Activated CD8-positive, alpha-beta T cell treated with anti-CD3 and anti-CD28 coated beads, Interleukin-2, amount 10 ng/mL, durations not matched to agents 7 days and 5 days (primary cell): ENCODE measurements at regions of chr6 and their contacts with region 1.

Region 1: GRCh38 chr6:29705389-29706231 is 17.6 kb upstream of the HLA-F start:
- DNase-seq: peak; percentile 39
- ATAC-seq: no peak
- H3K4me3 Mint-ChIP-seq: no peak overlapping the region
- H3K27ac Mint-ChIP-seq: no peak overlapping the region
- H3K4me1 Mint-ChIP-seq: peaks cover 51% of the 10 kb centered on the region
- H3K27me3 Mint-ChIP-seq: peaks cover 13% of the 10 kb centered on the region

Region 2: DNA sequence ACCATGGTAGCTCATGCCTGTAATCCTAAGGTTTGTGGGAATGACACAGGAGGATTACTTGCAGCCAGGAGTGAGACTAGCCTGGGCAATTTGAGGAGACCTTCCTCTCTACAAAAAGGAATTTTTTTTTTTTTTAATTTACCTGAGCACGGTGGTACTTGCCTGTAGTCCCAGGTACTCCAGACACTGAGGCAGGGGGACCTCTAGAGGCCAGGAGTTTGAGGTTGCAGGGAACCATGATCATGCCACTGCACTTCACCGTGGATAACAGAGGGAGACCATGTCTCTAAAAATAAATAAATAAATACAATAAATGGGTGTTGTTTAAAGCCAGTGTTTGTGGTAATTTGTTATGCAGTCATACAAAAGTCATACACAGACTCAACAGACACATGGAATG is 15.3 kb after region 1 on chr6:
- CTCF ChIA-PET with region 1: interaction called, 16 read pairs
- POLR2A ChIA-PET with region 1: no interaction called
- DNase-seq: no peak
- ATAC-seq: no peak
- H3K4me3 Mint-ChIP-seq: no peak overlapping the region
- H3K27ac Mint-ChIP-seq: no peak overlapping the region
- H3K4me1 Mint-ChIP-seq: peaks cover 36% of the 10 kb centered on the region
- H3K27me3 Mint-ChIP-seq: no peaks in the 10 kb centered on the region

Region 3: DNA sequence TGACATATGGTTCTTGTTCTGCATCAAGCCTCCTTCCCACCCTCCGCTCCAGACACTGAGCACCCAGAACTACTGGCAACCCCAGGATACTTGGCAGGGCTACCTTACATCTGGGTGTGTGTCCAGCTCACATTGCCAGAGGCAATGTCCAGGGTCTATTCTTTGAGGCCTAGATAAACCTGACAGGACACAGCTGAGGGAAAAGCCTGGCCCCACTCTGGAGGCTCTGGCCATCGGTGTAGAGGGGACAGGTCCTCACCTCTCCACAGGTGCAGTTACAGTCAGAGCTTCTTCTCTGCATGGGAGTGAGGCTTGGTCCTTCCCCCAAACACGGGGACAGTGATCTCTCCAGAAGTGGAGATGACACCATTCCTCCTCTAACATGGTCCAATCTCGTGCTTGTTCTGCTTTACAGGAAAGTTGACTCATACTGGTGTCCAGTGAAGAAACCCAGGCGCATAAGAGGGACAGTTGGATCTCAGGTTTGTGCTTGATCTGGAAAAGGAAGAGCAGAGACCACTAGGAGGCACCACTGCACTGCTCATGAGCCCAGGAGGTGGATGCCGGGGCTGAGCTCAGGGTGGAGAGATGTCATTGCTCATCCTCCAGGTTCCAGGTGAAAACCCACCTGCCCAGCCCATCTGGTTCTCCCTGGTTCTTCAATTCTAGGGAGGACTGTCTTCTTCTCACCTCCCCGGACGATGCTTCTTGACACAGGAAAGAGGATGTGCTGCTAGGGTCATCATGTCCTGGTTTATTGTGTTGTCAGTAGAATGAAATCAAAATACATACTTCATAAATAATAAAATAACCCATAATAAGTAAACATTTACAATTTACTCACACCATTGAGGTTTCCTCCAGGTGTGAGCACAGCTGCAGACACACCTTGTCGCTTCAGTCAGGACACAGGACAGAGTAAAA is 32.4 kb after region 1 on chr6:
- CTCF ChIA-PET with region 1: interaction called, 12 read pairs
- POLR2A ChIA-PET with region 1: no interaction called
- DNase-seq: peak; percentile 80
- ATAC-seq: peak; percentile 90
- H3K4me3 Mint-ChIP-seq: no peak overlapping the region
- H3K27ac Mint-ChIP-seq: no peak overlapping the region
- H3K4me1 Mint-ChIP-seq: peaks cover 18% of the 10 kb centered on the region
- H3K27me3 Mint-ChIP-seq: no peaks in the 10 kb centered on the region

Region 4: DNA sequence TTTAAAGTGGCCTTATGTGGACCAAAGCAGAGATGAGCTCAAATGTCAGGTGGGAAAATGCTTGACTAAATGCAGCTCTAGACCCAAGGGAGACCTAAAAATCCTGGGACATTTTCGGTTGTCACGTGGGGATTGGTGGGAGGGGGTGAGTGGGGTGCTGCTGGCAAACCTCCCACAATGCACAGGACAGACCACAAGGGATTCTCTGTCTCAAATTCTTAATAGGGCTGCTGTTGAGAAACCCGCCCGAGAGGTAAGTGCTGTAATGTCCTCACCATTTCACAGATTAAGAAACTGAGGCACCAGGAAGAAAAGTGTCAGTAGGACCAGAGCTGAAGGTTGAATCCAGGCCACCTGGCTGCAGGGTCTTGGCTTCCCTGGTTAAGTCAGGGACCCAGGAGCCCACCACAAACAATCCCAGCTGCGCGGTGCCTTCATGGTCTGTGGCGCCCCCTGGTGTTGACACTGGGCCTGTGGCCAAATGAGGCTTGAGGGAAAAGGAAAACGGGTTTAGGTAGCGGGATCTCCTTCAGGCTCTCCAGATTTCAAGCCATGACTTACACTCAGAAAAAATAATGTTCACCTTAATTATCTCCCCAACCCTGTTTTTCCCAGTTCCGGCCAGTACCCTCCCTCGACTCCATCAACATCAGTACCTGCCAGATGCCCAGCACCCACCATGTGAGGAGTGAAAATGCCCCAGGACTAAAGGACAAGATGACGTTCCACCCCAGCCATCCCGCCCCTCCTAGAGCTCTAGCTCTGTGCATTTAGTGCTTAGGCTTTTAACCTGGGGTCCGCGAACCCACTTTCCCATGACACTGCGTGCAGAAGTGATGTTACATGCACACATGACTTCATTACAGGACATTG is 129.2 kb after region 1 on chr6:
- CTCF ChIA-PET with region 1: interaction called, 27 read pairs
- POLR2A ChIA-PET with region 1: no interaction called
- DNase-seq: peak; percentile 62
- ATAC-seq: peak; percentile 61
- H3K4me3 Mint-ChIP-seq: no peak overlapping the region
- H3K27ac Mint-ChIP-seq: no peak overlapping the region
- H3K4me1 Mint-ChIP-seq: peaks cover 8% of the 10 kb centered on the region
- H3K27me3 Mint-ChIP-seq: peaks cover 59% of the 10 kb centered on the region